IMR-90 (cell line): ENCODE measurements at regions of chr20 and their contacts with region 1.

Region 1: GRCh38 chr20:17504898-17505635 is 26.1 kb downstream of the BFSP1 start:
- DNase-seq: peak; percentile 59
- ATAC-seq: peak; percentile 82
- H3K4me3 ChIP-seq: peak overlapping the region; percentile 43
- H3K27ac ChIP-seq: no peak overlapping the region
- H3K4me1 ChIP-seq: peaks cover 4% of the 10 kb centered on the region; the same call in 1 of the 2 replicates
- H3K27me3 ChIP-seq: peaks cover 9% of the 10 kb centered on the region; the same call in 1 of the 2 replicates
- CTCF ChIP-seq: peak; percentile 79
- POLR2A ChIP-seq: no peak
- RAD21 ChIP-seq: peak; percentile 83

Region 2: GRCh38 chr20:17202673-17203072 is 302.4 kb before region 1 on chr20:
- CTCF ChIA-PET with region 1: no interaction called
- POLR2A ChIA-PET with region 1: no interaction called
- dilution Hi-C with region 1: no loop called
- in situ Hi-C with region 1: no loop called
- intact Hi-C with region 1: no loop called
- DNase-seq: no peak
- ATAC-seq: no peak; the same call in 1 of the 2 replicates
- H3K4me3 ChIP-seq: no peak overlapping the region
- H3K27ac ChIP-seq: no peak overlapping the region
- H3K4me1 ChIP-seq: no peaks in the 10 kb centered on the region
- H3K27me3 ChIP-seq: peaks cover 3% of the 10 kb centered on the region; the same call in 1 of the 2 replicates
- CTCF ChIP-seq: no peak
- POLR2A ChIP-seq: no peak
- RAD21 ChIP-seq: no peak

Region 3: DNA sequence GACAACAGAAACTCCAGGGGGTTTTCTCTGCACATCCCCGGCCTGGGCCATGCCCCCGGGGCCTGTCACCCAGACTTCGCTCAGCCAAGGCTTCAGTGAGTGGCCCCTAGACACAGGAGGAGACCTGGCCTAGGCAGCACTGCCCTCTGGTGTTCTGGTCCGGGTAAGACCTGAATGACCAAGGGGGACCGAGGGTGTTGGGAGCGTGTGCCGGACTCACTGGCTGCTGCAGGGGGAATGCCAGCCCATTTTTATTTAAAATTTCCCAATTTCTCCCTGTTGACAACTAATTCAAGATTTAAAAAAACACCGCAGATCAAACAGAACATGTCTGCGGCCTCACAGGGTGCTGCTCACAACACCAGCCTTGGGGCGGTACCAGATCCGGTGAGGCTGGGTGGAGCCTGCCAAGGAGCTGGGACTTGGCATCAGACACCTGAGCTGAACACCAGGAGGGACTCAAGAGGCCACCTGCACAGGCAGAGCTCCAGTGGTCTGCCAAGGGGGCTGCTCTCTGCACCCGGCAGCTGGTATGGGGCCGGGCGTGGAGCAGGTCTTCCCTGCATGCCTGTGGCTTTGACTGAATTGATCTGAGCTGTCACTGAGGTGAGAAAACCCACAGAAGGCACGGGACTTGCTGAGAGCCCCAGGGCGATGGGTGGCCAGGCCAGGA is 112.6 kb after region 1 on chr20:
- CTCF ChIA-PET with region 1: no interaction called
- POLR2A ChIA-PET with region 1: no interaction called
- dilution Hi-C with region 1: no loop called
- in situ Hi-C with region 1: no loop called
- intact Hi-C with region 1: loop called (anchors 10 kb)
- DNase-seq: no peak
- ATAC-seq: peak; percentile 38
- H3K4me3 ChIP-seq: no peak overlapping the region
- H3K27ac ChIP-seq: no peak overlapping the region
- H3K4me1 ChIP-seq: no peaks in the 10 kb centered on the region; the same call in 1 of the 2 replicates
- H3K27me3 ChIP-seq: no peaks in the 10 kb centered on the region
- CTCF ChIP-seq: peak; percentile 53
- POLR2A ChIP-seq: no peak
- RAD21 ChIP-seq: peak; percentile 70

Region 4: GRCh38 chr20:17898548-17898994 is 393.5 kb after region 1 on chr20:
- CTCF ChIA-PET with region 1: no interaction called
- POLR2A ChIA-PET with region 1: no interaction called
- dilution Hi-C with region 1: no loop called
- in situ Hi-C with region 1: no loop called
- intact Hi-C with region 1: loop called (anchors 5 kb)
- DNase-seq: peak; percentile 75
- ATAC-seq: peak; percentile 70
- H3K4me3 ChIP-seq: no peak overlapping the region
- H3K27ac ChIP-seq: no peak overlapping the region
- H3K4me1 ChIP-seq: peaks cover 13% of the 10 kb centered on the region
- H3K27me3 ChIP-seq: no peaks in the 10 kb centered on the region
- CTCF ChIP-seq: peak; percentile 95
- POLR2A ChIP-seq: 0 out of 2 replicates have a peak, but pooled peaks have one; percentile 34
- RAD21 ChIP-seq: peak; percentile 99

Region 5: DNA sequence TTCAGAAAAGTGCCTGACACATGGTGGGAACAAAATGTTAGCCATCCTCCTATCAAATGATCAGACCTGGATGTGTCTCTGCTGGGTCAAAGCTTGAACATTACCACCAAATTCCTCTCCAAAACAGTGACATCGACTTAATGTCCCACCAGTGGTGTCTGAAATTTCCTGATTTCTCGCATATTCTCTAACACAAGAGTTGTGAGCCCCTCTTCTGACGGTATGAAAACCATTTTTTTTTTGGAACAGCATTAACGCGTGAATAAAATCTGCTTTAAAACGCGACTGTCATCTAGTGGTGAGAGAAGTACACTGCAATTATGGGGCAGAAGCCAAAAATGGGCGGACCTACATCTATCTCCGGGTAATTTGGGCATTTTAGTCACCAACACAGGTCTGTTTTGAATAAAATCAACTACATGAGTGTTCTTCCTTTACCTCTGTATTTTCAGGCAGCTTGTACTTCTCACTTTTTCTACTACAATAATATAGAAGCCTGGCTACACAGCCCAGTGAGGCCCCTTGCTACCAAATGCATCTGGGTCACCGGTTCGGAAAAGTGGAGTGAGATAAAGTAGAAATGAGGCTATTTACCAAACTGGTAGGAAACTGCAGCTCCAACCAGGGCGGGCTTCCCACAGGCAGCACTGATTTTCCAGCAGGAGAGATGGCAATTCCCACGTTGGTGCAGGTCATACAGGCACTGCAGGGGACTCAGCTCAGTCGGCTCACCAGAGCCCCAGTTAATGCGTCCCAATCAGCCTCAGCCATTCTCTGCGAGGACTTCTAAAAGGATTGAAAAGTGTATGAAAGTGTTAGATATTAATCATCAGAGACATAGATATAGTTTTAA is 491.1 kb after region 1 on chr20:
- CTCF ChIA-PET with region 1: no interaction called
- POLR2A ChIA-PET with region 1: no interaction called
- dilution Hi-C with region 1: no loop called
- in situ Hi-C with region 1: loop called (anchors 10 kb)
- intact Hi-C with region 1: loop called (anchors 2 kb)
- DNase-seq: peak; percentile 74
- ATAC-seq: peak; percentile 91
- H3K4me3 ChIP-seq: no peak overlapping the region
- H3K27ac ChIP-seq: no peak overlapping the region
- H3K4me1 ChIP-seq: no peaks in the 10 kb centered on the region
- H3K27me3 ChIP-seq: peaks cover 4% of the 10 kb centered on the region; the same call in 1 of the 2 replicates
- CTCF ChIP-seq: peak; percentile 99
- POLR2A ChIP-seq: 0 out of 2 replicates have a peak, but pooled peaks have one; percentile 27
- RAD21 ChIP-seq: peak; percentile 94

Region 6: GRCh38 chr20:18276821-18277220 is 771.8 kb after region 1 on chr20:
- CTCF ChIA-PET with region 1: interaction called, 3 read pairs
- POLR2A ChIA-PET with region 1: no interaction called
- dilution Hi-C with region 1: no loop called
- in situ Hi-C with region 1: loop called (anchors 10 kb)
- intact Hi-C with region 1: loop called (anchors 1 kb)
- DNase-seq: peak; percentile 71
- ATAC-seq: peak; percentile 96
- H3K4me3 ChIP-seq: no peak overlapping the region
- H3K27ac ChIP-seq: no peak overlapping the region
- H3K4me1 ChIP-seq: peaks cover 1% of the 10 kb centered on the region; the same call in 1 of the 2 replicates
- H3K27me3 ChIP-seq: peaks cover 10% of the 10 kb centered on the region
- CTCF ChIP-seq: peak; percentile 86
- POLR2A ChIP-seq: no peak
- RAD21 ChIP-seq: peak; percentile 79

Region 7: GRCh38 chr20:18678549-18679419 is 1173.7 kb after region 1 on chr20:
- CTCF ChIA-PET with region 1: no interaction called
- POLR2A ChIA-PET with region 1: no interaction called
- dilution Hi-C with region 1: no loop called
- in situ Hi-C with region 1: no loop called
- intact Hi-C with region 1: no loop called
- DNase-seq: peak; percentile 39
- ATAC-seq: no peak
- H3K4me3 ChIP-seq: no peak overlapping the region
- H3K27ac ChIP-seq: no peak overlapping the region
- H3K4me1 ChIP-seq: no peaks in the 10 kb centered on the region
- H3K27me3 ChIP-seq: no peaks in the 10 kb centered on the region
- CTCF ChIP-seq: no peak
- POLR2A ChIP-seq: no peak
- RAD21 ChIP-seq: no peak